Right ventricle myocardium superior (tissue), 1 donor: ENCODE measurements at regions of chr2 and their contacts with region 1.

Region 1: GRCh38 chr2:218852911-218853667 is 6.5 kb upstream of the WNT6 start:
- DNase-seq: no peak
- ATAC-seq: peak; percentile 64

Region 2: GRCh38 chr2:218360447-218360846 is 492.6 kb before region 1 on chr2:
- intact Hi-C with region 1: no loop called
- DNase-seq: no peak
- ATAC-seq: peak; percentile 40

Region 3: DNA sequence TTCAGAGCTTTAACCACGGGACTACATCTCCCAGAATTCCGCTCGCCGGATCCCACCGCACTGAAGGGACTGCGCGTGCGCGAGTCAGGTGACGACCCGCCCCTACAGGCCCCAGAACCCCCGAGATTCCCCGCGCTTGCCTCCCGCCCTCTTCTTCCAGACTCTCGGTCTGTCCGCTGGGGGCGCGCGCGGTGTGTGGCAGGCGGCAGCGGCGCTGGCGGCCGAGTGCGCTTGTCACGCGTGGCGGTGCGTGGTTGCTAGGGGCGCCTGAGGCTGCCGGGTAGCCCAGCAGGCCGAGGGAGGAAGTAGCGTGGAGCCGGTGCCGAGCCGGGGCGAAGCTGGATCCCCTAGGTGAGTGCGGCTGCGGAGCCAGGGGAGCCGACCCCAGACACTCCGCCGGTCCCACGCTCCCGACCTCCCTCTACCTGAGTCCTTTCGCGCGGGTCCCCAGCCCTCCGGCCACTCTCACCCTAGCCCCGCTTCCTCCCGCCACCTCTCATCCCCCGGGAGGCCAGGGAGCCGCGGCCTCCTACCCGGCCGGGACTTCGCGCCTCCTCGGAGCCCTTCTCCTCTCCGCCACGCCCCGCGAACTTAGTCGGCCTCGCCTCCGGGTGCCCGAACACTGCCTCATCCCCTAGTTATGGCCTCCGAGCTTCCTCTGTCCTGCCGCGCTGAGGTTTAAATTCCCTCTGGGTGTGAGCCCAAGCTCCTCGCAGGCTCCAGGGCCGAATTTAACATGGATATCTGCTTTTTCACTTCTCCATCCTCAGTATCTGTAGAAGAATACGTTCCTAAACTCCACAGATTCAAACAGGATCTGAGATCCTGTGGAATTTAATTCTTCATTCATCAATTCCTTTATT is 142.2 kb before region 1 on chr2 and contains the start of gene TTLL4:
- intact Hi-C with region 1: loop called (anchors 5 kb)
- DNase-seq: peak; percentile 99
- ATAC-seq: peak; percentile 99
- total RNA-seq, gene TTLL4: 5.6 TPM

Region 4: GRCh38 chr2:218727502-218728165 is 125.5 kb before region 1 on chr2:
- intact Hi-C with region 1: loop called (anchors 5 kb)
- DNase-seq: no peak
- ATAC-seq: no peak